HCT116 (cell line): ENCODE measurements at regions of chrX and their contacts with region 1.

Region 1: GRCh38 chrX:18931972-18932371 is 51.9 kb downstream of the PHKA2 start:
- DNase-seq: no peak
- ATAC-seq: peak; percentile 62
- H3K4me3 ChIP-seq: no peak overlapping the region
- H3K27ac ChIP-seq: no peak overlapping the region
- H3K4me1 ChIP-seq: no peaks in the 10 kb centered on the region
- H3K27me3 ChIP-seq: no peaks in the 10 kb centered on the region
- CTCF ChIP-seq: peak in 2 of 3 experiments; percentile 42 to 46; a peak in 3 of 6 replicates
- POLR2A ChIP-seq: no peak
- RAD21 ChIP-seq: peak; percentile 61

Region 2: GRCh38 chrX:18149454-18149853 is 782.5 kb before region 1 on chrX:
- CTCF ChIA-PET with region 1: no interaction called
- POLR2A ChIA-PET with region 1: no interaction called
- RAD21 ChIA-PET with region 1: no interaction called
- intact Hi-C with region 1: no loop called
- DNase-seq: no peak
- ATAC-seq: no peak
- H3K4me3 ChIP-seq: no peak overlapping the region
- H3K27ac ChIP-seq: no peak overlapping the region
- H3K4me1 ChIP-seq: no peaks in the 10 kb centered on the region
- H3K27me3 ChIP-seq: peaks cover 11% of the 10 kb centered on the region; the same call in 1 of the 2 replicates
- CTCF ChIP-seq: no peak
- POLR2A ChIP-seq: no peak
- RAD21 ChIP-seq: no peak

Region 3: GRCh38 chrX:18769812-18770573 is 162.0 kb before region 1 on chrX:
- CTCF ChIA-PET with region 1: no interaction called
- POLR2A ChIA-PET with region 1: no interaction called
- RAD21 ChIA-PET with region 1: no interaction called
- intact Hi-C with region 1: no loop called
- DNase-seq: no peak
- ATAC-seq: no peak
- H3K4me3 ChIP-seq: no peak overlapping the region
- H3K27ac ChIP-seq: no peak overlapping the region
- H3K4me1 ChIP-seq: no peaks in the 10 kb centered on the region
- H3K27me3 ChIP-seq: no peaks in the 10 kb centered on the region
- CTCF ChIP-seq: 0 out of 6 replicates have a peak, but pooled peaks of 1 of the 3 experiments have one; percentile 11
- POLR2A ChIP-seq: no peak
- RAD21 ChIP-seq: no peak

Region 4: DNA sequence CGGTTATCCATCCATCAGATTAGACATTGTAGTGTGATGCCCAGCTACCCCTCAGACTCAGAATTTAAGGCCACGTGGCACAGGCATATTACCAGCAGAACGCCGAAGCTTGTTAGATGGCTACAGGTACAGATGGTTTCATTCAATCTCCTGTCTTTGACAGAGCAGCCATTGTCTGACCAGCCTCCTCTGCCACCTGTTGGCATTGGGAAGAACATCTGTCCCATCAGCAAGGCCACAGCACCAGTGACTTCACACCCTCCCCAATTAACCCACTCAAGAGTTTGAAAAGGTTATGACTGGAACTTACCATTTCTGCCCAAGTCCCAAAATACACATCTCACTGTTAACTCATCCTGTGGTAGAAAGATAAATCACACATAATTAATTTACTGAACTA is 73.9 kb after region 1 on chrX:
- CTCF ChIA-PET with region 1: no interaction called
- POLR2A ChIA-PET with region 1: no interaction called
- RAD21 ChIA-PET with region 1: no interaction called
- intact Hi-C with region 1: loop called (anchors 10 kb)
- DNase-seq: no peak
- ATAC-seq: peak; percentile 60; the same call in 1 of the 2 replicates
- H3K4me3 ChIP-seq: no peak overlapping the region
- H3K27ac ChIP-seq: no peak overlapping the region
- H3K4me1 ChIP-seq: no peaks in the 10 kb centered on the region
- H3K27me3 ChIP-seq: no peaks in the 10 kb centered on the region
- CTCF ChIP-seq: peak; percentile 23 to 26 (median 26); a peak in 3 of 6 replicates
- POLR2A ChIP-seq: no peak
- RAD21 ChIP-seq: peak; percentile 42